CD4-positive, alpha-beta memory T cell (primary cell): ENCODE measurements at regions of chr6 and their contacts with region 1.

Region 1: DNA sequence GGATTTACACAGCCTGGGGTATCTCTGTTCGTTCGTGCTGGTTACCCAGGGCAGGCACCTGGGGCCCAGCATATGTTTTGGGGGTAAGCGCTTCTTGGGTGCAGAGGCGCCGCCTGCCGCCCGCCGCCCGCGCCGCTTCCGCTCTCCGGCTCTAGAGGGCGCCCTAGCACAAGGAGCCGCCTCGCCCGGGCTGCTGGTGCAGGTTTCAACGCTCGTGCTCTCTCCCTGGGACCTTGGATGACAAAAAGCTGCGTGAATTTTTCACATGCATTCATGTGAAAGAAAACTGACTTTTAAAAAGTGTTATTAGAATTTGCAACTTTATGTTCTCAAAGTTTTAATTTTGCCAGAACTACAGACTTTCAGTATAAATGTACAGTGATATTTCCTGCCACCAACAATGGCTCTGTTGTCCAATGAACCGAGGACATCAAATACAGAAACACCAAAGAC is 32.5 kb downstream of the PRR18 start:
- DNase-seq: peak; percentile 57 to 84 (median 77)
- H3K4me3 ChIP-seq: no peak overlapping the region
- H3K4me3 Mint-ChIP-seq: no peak overlapping the region
- H3K27ac ChIP-seq: no peak overlapping the region
- H3K27ac Mint-ChIP-seq: peak overlapping the region in 1 of 7 donors; percentile 66
- H3K4me1 ChIP-seq: peaks cover 4% of the 10 kb centered on the region
- H3K4me1 Mint-ChIP-seq: peaks cover 0 to 8% (median 6%) of the 10 kb centered on the region in 4 donors
- H3K27me3 ChIP-seq: no peaks in the 10 kb centered on the region
- H3K27me3 Mint-ChIP-seq: peaks cover 0 to 3% of the 10 kb centered on the region in 2 donors

Region 2: DNA sequence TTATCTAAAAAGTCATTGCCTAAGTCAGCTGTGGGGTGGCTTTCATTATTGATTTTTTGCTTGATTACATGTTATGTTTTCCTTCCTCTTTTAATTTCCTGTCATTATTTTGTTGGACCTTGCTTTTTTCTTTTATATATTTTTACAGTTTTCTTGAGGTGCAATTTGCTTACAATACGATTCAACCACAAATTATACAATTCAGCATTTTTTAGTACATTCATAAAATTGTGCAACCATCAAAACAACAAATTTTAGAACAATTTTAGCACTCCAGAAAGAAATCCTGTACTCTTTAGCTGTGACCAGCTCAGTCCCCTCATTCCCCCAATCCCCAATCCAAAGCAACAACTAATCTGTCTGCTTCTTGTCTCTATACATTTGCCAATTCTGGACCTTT is 1575.2 kb before region 1 on chr6:
- CTCF ChIA-PET with region 1: no interaction called
- POLR2A ChIA-PET with region 1: no interaction called
- intact Hi-C with region 1: no loop called
- DNase-seq: no peak
- H3K4me3 ChIP-seq: no peak overlapping the region
- H3K4me3 Mint-ChIP-seq: no peak overlapping the region
- H3K27ac ChIP-seq: no peak overlapping the region
- H3K27ac Mint-ChIP-seq: no peak overlapping the region
- H3K4me1 ChIP-seq: no peaks in the 10 kb centered on the region
- H3K4me1 Mint-ChIP-seq: no peaks in the 10 kb centered on the region
- H3K27me3 ChIP-seq: no peaks in the 10 kb centered on the region
- H3K27me3 Mint-ChIP-seq: no peaks in the 10 kb centered on the region

Region 3: DNA sequence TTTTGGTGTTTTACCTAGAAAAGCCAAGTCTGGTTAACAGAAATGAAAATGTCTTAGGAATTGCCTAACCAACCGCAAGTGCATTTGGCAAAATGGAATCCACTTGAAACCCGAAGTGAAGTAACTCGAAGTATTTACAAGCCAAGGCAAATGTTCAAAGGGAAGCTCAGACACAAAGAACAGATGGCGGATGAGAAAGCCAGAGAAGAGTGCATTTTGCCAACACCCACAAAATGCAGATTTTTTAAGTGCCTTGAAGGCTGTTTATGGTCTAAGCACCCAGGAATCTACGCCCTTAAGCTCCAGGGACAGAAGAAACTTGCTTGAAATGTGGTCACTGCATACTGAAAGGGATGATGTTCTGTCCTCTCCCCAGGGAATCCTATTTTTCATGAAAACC is 38.1 kb before region 1 on chr6:
- CTCF ChIA-PET with region 1: interaction called, 11 read pairs
- POLR2A ChIA-PET with region 1: no interaction called
- intact Hi-C with region 1: loop called (anchors 1 kb)
- DNase-seq: no peak
- H3K4me3 ChIP-seq: no peak overlapping the region
- H3K4me3 Mint-ChIP-seq: no peak overlapping the region
- H3K27ac ChIP-seq: no peak overlapping the region
- H3K27ac Mint-ChIP-seq: no peak overlapping the region
- H3K4me1 ChIP-seq: peaks cover 3% of the 10 kb centered on the region
- H3K4me1 Mint-ChIP-seq: peaks cover 0 to 9% (median 9%) of the 10 kb centered on the region in 4 donors
- H3K27me3 ChIP-seq: no peaks in the 10 kb centered on the region
- H3K27me3 Mint-ChIP-seq: peaks cover 10 to 15% of the 10 kb centered on the region in 2 donors

Region 4: DNA sequence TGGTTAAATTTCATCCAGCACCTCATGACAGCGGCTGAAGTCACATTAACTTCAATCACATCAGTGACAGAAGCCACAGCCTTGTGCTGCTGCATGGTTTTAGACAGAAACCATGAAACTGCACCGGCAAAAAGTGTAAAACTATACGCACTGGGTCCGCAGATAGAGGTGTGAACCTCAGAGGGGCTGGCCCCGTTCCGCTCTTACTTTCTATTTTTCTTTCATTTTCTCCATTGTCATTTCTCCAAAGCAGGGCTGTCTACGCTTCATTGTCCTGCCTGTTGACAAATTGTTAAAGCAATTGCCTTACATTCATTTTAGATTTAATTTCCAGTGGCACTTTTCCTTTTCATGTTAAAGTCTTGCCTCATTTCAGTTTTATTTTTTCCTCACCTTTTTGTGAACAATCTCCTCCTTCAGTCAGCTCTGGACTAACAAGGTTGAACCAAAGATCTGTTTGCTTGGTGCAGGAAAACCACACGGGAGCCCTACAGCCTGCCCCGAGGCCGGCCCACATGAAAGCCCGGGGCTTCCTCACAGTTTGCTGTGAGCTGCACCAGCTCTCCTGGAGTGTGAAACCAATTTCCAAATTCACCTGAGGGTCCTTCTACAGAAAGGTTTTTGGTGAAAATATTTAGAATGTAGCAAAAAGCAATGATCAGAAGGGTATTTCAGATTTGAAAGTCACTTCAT is 31.2 kb before region 1 on chr6:
- CTCF ChIA-PET with region 1: interaction called, 11 read pairs
- POLR2A ChIA-PET with region 1: no interaction called
- intact Hi-C with region 1: no loop called
- DNase-seq: peak in 3 of 5 donors; percentile 26 to 46 (median 26)
- H3K4me3 ChIP-seq: no peak overlapping the region
- H3K4me3 Mint-ChIP-seq: peak overlapping the region; percentile 67 to 91 (median 77)
- H3K27ac ChIP-seq: no peak overlapping the region
- H3K27ac Mint-ChIP-seq: peak overlapping the region; percentile 4 to 90 (median 55)
- H3K4me1 ChIP-seq: peaks cover 30% of the 10 kb centered on the region
- H3K4me1 Mint-ChIP-seq: peaks cover 14 to 38% (median 26%) of the 10 kb centered on the region in 4 donors
- H3K27me3 ChIP-seq: no peaks in the 10 kb centered on the region
- H3K27me3 Mint-ChIP-seq: peaks cover 1 to 3% of the 10 kb centered on the region in 2 donors

Region 5: GRCh38 chr6:166253281-166253681 is 22.5 kb before region 1 on chr6:
- CTCF ChIA-PET with region 1: interaction called, 11 read pairs
- POLR2A ChIA-PET with region 1: no interaction called
- intact Hi-C with region 1: no loop called
- DNase-seq: peak in 1 of 5 donors; percentile 46
- H3K4me3 ChIP-seq: peak overlapping the region in 1 of 2 donors; percentile 14
- H3K4me3 Mint-ChIP-seq: peak overlapping the region in 7 of 8 donors; percentile 49 to 88 (median 82)
- H3K27ac ChIP-seq: no peak overlapping the region
- H3K27ac Mint-ChIP-seq: peak overlapping the region in 2 of 7 donors; percentile 8 to 48
- H3K4me1 ChIP-seq: peaks cover 24% of the 10 kb centered on the region
- H3K4me1 Mint-ChIP-seq: peaks cover 4 to 37% (median 23%) of the 10 kb centered on the region in 4 donors
- H3K27me3 ChIP-seq: peaks cover 7% of the 10 kb centered on the region
- H3K27me3 Mint-ChIP-seq: peaks cover 11 to 14% of the 10 kb centered on the region in 2 donors

Region 6: GRCh38 chr6:166258854-166259276 is 16.9 kb before region 1 on chr6:
- CTCF ChIA-PET with region 1: interaction called, 17 read pairs
- POLR2A ChIA-PET with region 1: interaction called, 4 read pairs
- intact Hi-C with region 1: loop called (anchors 1 kb)
- DNase-seq: peak in 1 of 5 donors; percentile 68
- H3K4me3 ChIP-seq: no peak overlapping the region
- H3K4me3 Mint-ChIP-seq: peak overlapping the region in 6 of 8 donors; percentile 75 to 87 (median 82)
- H3K27ac ChIP-seq: no peak overlapping the region
- H3K27ac Mint-ChIP-seq: peak overlapping the region in 6 of 7 donors; percentile 36 to 96 (median 92)
- H3K4me1 ChIP-seq: peaks cover 32% of the 10 kb centered on the region
- H3K4me1 Mint-ChIP-seq: peaks cover 4 to 48% (median 34%) of the 10 kb centered on the region in 4 donors
- H3K27me3 ChIP-seq: peaks cover under 1% of the 10 kb centered on the region
- H3K27me3 Mint-ChIP-seq: peaks cover 6 to 8% of the 10 kb centered on the region in 2 donors

Region 7: DNA sequence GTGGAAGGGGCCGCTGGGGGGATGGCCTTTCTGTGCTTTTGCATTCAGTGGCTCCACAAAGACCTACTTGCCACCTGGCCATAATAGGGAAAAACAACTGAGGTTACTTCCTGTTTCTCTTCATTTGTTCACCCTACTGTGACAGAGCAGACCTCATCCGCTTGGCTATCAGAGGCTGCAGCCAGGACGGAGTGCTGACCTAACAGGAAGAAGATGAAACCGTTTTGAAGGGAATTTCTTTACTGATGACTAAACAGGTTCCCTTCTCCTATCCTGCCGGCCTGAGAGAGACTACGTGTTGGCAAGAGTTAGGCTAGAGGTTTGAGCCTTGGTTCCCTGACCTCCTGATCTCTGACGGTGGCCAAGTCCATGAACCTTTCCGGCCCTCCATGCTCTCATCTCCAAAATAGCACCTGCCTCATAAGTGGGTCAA is 11.1 kb after region 1 on chr6:
- CTCF ChIA-PET with region 1: interaction called, 18 read pairs
- POLR2A ChIA-PET with region 1: no interaction called
- intact Hi-C with region 1: no loop called
- DNase-seq: no peak
- H3K4me3 ChIP-seq: no peak overlapping the region
- H3K4me3 Mint-ChIP-seq: no peak overlapping the region
- H3K27ac ChIP-seq: no peak overlapping the region
- H3K27ac Mint-ChIP-seq: peak overlapping the region in 1 of 7 donors; percentile 5
- H3K4me1 ChIP-seq: no peaks in the 10 kb centered on the region
- H3K4me1 Mint-ChIP-seq: no peaks in the 10 kb centered on the region
- H3K27me3 ChIP-seq: no peaks in the 10 kb centered on the region
- H3K27me3 Mint-ChIP-seq: peaks cover 2 to 5% of the 10 kb centered on the region in 2 donors

Region 8: DNA sequence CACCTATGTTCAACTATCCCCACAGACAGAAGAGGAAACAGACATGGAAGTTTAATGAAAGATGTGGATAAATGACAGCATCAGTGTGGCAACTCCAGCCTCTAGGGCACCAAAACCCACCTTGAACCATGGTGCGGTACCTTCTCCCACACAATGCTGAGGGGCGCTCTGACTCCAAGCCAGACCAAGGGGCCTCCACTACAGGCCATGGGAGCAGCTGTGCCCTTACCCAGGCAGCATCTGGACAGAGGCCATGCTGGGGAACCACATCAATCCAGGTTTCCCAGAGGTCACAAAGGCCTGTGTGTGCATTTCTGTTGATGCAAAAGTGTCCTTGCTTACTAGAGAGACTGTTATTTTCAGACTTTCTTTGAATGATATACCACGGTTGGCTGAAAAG is 28.4 kb after region 1 on chr6:
- CTCF ChIA-PET with region 1: no interaction called
- POLR2A ChIA-PET with region 1: no interaction called
- intact Hi-C with region 1: no loop called
- DNase-seq: no peak
- H3K4me3 ChIP-seq: no peak overlapping the region
- H3K4me3 Mint-ChIP-seq: no peak overlapping the region
- H3K27ac ChIP-seq: no peak overlapping the region
- H3K27ac Mint-ChIP-seq: no peak overlapping the region
- H3K4me1 ChIP-seq: peaks cover 5% of the 10 kb centered on the region
- H3K4me1 Mint-ChIP-seq: peaks cover 0 to 6% (median 2%) of the 10 kb centered on the region in 4 donors
- H3K27me3 ChIP-seq: peaks cover 11% of the 10 kb centered on the region
- H3K27me3 Mint-ChIP-seq: peaks cover 25 to 39% of the 10 kb centered on the region in 2 donors

Region 9: GRCh38 chr6:166512567-166512966 is 236.8 kb after region 1 on chr6:
- CTCF ChIA-PET with region 1: interaction called, 12 read pairs
- POLR2A ChIA-PET with region 1: no interaction called
- intact Hi-C with region 1: loop called (anchors 1 kb)
- DNase-seq: peak; percentile 25 to 52 (median 47)
- H3K4me3 ChIP-seq: no peak overlapping the region
- H3K4me3 Mint-ChIP-seq: peak overlapping the region in 1 of 8 donors; percentile 47
- H3K27ac ChIP-seq: no peak overlapping the region
- H3K27ac Mint-ChIP-seq: peak overlapping the region in 5 of 7 donors; percentile 8 to 74 (median 25)
- H3K4me1 ChIP-seq: peaks cover 8% of the 10 kb centered on the region
- H3K4me1 Mint-ChIP-seq: peaks cover 7 to 13% (median 8%) of the 10 kb centered on the region in 4 donors
- H3K27me3 ChIP-seq: no peaks in the 10 kb centered on the region
- H3K27me3 Mint-ChIP-seq: no peaks in the 10 kb centered on the region

Region 10: DNA sequence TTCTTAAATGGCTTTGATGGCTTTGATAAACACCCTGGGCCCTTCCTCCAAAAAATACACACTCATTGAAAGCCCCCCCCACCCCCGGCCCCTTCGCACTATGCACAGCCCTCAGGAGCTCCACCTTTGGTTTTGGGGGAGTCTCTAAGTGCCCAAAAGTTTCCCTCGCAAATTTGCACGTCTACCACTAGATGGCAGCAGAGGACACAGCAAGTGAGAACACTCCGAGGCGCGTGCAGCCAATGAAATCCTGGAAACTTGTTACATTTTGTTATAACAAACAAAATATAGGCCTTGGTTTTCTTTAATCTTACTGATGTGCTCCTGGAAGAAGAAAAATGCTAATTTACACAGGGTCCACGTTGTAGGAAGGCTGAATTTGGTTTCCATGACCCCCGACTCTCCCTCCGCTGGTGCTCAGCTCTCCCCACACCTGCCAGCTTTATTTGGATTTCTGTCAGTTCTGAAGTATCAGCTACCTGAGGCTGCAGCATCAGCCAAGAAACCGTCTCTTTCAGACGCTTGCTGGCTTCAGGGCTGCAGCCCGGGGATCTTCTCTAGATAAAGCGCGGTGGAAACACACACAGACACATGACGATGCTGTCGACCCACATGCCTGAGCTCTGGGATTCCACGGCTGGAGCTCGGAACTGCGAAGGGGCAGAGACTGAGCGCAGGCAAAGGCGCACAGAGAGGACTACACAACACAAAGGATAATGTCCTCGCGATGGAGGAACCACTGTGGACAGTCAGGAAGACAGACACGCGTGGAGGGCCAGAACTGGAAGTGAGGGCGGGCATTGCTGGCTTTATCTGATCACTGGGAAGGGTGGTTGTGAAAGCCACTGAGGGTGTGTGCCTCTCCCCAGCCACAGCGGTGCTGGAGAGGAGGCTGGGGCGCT is 499.7 kb after region 1 on chr6:
- CTCF ChIA-PET with region 1: no interaction called
- POLR2A ChIA-PET with region 1: no interaction called
- intact Hi-C with region 1: no loop called
- DNase-seq: peak; percentile 68 to 76 (median 73)
- H3K4me3 ChIP-seq: no peak overlapping the region
- H3K4me3 Mint-ChIP-seq: no peak overlapping the region
- H3K27ac ChIP-seq: no peak overlapping the region
- H3K27ac Mint-ChIP-seq: no peak overlapping the region
- H3K4me1 ChIP-seq: peaks cover 5% of the 10 kb centered on the region
- H3K4me1 Mint-ChIP-seq: peaks cover 0 to 5% (median 3%) of the 10 kb centered on the region in 4 donors
- H3K27me3 ChIP-seq: no peaks in the 10 kb centered on the region
- H3K27me3 Mint-ChIP-seq: peaks cover 2 to 6% of the 10 kb centered on the region in 2 donors